Vagina (tissue), 2 donors: ENCODE measurements at regions of chr1 and their contacts with region 1.

Region 1: DNA sequence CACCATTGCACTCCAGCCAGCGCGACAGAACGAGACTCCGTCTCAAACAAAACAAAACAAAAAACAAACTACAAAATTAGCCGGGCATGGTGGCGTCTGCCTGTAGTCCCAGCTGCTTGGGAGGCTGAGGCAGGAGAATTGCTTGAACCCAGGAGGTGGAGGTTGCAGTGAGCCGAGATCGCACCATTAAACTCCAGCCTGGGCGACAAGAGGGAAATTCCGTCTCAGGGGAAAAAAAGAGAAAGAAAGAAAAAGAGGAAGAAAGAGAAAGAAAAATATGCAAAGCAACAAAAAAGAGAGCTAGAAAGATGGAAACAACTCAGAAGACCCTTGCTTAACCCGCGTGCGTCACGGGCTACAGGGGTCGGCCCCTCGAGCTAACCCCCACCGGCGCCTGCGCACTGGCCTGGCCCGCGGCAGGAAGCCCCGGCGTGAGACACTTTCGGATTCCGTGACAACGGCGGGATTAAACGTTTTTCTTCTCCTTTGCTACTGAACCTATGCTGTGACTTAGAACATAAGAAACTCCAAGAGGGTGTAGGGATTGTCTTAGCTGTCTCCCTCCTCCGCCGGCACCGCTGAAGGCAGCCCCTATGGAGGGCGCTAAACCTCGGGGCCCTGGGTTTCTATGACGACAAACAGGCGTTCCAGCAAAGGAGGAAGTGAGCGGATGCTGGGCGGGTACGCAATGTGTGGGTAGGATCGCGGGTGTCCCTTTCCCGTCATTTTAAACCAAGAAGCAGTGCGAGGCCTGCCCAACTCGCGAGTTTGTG is at the start of gene AXDND1:
- DNase-seq: no peak
- H3K4me3 ChIP-seq: peak within 1 kb of the TSS; percentile 59 to 67
- H3K27ac ChIP-seq: peak within 1 kb of the TSS; percentile 88
- H3K4me1 ChIP-seq: peaks cover 5% of the 10 kb centered on the region
- H3K27me3 ChIP-seq: no peaks in the 10 kb centered on the region
- CTCF ChIP-seq: no peak
- POLR2A ChIP-seq: no peak
- total RNA-seq, gene AXDND1: not detected

Region 2: DNA sequence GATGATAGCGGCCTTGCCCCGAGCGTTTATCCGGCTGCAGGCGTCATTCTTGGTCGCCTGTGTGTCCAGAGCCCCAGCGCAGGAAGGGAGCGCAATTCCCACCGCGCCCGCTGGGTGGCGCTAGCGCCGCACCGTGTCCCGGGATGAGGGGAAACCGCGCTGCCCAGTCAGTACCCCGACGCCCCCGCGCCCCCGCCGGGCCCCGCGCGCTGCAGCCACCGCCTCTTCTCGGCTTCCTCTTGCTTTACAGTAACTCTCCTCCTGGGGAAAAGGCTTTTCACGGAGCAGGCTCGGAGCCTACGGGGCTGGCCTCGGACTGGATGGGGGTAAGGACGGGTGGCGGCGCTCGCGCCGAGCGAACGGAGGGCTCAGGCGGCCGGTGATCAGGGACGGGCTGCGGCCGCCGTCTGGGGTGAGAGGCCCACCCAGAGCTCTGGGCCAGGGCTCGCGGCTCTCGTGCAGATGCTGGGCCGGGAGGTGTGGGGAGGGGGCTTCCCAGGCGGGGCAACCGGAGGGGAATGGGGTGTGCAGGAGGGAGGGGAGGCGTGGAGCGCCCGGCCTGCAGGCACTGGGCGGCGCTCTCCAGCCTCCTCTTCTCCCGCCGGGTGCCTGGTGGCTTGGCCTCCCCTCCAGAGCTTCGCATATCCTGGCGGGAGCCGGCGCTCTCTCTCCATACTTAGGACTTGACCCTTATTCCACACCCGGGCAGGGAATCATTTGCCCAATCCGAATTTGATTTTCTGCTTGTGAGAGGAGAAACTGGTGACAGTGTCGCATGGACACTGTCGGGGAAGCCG is 822.7 kb before region 1 on chr1:
- intact Hi-C with region 1: loop called (anchors 5 kb)
- DNase-seq: peak in 1 of 2 donors; percentile 95
- H3K4me3 ChIP-seq: peak overlapping the region; percentile 62 to 93
- H3K27ac ChIP-seq: peak overlapping the region; percentile 86
- H3K4me1 ChIP-seq: peaks cover 45% of the 10 kb centered on the region
- H3K27me3 ChIP-seq: no peaks in the 10 kb centered on the region
- CTCF ChIP-seq: peak; percentile 82 to 99 (median 95)
- POLR2A ChIP-seq: no peak

Region 3: DNA sequence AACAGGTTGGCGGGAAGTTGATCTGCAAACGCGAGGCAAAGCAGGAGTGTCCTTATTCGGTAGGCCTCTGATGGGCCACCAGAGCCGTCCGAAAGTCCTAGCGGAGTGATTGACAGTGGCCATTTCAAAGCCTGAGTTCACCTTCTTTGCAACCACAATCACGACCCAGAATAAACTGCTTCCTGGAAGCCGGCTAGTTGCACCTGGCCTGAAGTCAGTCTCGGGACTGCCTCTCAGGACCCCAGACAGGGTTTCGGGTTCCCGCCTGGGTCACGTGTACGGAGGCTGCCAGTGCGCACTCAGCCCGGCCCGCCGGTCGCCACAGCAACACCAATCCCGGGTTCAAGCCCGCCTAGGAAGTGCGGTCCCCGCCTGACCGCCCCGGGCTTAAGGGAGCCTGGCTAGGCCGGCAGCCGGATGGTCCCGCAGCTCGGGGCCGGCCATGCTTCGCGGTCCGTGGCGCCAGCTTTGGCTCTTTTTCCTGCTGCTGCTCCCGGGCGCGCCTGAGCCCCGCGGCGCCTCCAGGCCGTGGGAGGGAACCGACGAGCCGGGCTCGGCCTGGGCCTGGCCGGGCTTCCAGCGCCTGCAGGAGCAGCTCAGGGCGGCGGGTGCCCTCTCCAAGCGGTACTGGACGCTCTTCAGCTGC is 283.7 kb before region 1 on chr1 and contains the start of gene TOR3A:
- intact Hi-C with region 1: loop called (anchors 2 kb)
- DNase-seq: peak in 1 of 2 donors; percentile 96
- H3K4me3 ChIP-seq: peak within 1 kb of the TSS; percentile 93 to 94
- H3K27ac ChIP-seq: peak within 1 kb of the TSS; percentile 83
- H3K4me1 ChIP-seq: peaks cover 27% of the 10 kb centered on the region
- H3K27me3 ChIP-seq: no peaks in the 10 kb centered on the region
- CTCF ChIP-seq: peak in 1 of 3 experiments; percentile 10
- POLR2A ChIP-seq: peak in 1 of 2 donors; percentile 60
- total RNA-seq, gene TOR3A: 20.4 TPM

Region 4: GRCh38 chr1:179293340-179294327 is 71.9 kb before region 1 on chr1 and contains the start of gene SOAT1:
- intact Hi-C with region 1: loop called (anchors 5 kb)
- DNase-seq: peak in 1 of 2 donors; percentile 94
- H3K4me3 ChIP-seq: peak within 1 kb of the TSS; percentile 77 to 83
- H3K27ac ChIP-seq: peak within 1 kb of the TSS; percentile 94
- H3K4me1 ChIP-seq: peaks cover 12% of the 10 kb centered on the region
- H3K27me3 ChIP-seq: no peaks in the 10 kb centered on the region
- CTCF ChIP-seq: no peak
- POLR2A ChIP-seq: peak in 1 of 2 donors; percentile 71
- total RNA-seq, gene SOAT1: 10.3 TPM